ENCODE measurements at regions of chr21 and their contacts with region 1.

Region 1: GRCh38 chr21:45140346-45140940 is 66.1 kb downstream of the ADARB1 start:
- DNase-seq: peak; percentile 88
- ATAC-seq: peak; percentile 96
- H3K4me3 Mint-ChIP-seq: no peak overlapping the region
- H3K27ac Mint-ChIP-seq: no peak overlapping the region
- H3K4me1 Mint-ChIP-seq: peaks cover 7% of the 10 kb centered on the region
- H3K27me3 Mint-ChIP-seq: no peaks in the 10 kb centered on the region

Region 2: GRCh38 chr21:44958471-44959191 is 181.8 kb before region 1 on chr21:
- CTCF ChIA-PET with region 1: interaction called, 275 read pairs
- DNase-seq: no peak
- ATAC-seq: no peak
- H3K4me3 Mint-ChIP-seq: no peak overlapping the region
- H3K27ac Mint-ChIP-seq: no peak overlapping the region
- H3K4me1 Mint-ChIP-seq: no peaks in the 10 kb centered on the region
- H3K27me3 Mint-ChIP-seq: no peaks in the 10 kb centered on the region

Region 3: GRCh38 chr21:45074818-45075595 is 65.4 kb before region 1 on chr21:
- CTCF ChIA-PET with region 1: interaction called, 69 read pairs
- DNase-seq: no peak
- ATAC-seq: peak; percentile 7
- H3K4me3 Mint-ChIP-seq: peak overlapping the region; percentile 76
- H3K27ac Mint-ChIP-seq: no peak overlapping the region
- H3K4me1 Mint-ChIP-seq: peaks cover 48% of the 10 kb centered on the region
- H3K27me3 Mint-ChIP-seq: peaks cover 9% of the 10 kb centered on the region

Region 4: GRCh38 chr21:45120975-45121374 is 19.5 kb before region 1 on chr21:
- CTCF ChIA-PET with region 1: interaction called, 135 read pairs
- DNase-seq: no peak
- ATAC-seq: no peak
- H3K4me3 Mint-ChIP-seq: no peak overlapping the region
- H3K27ac Mint-ChIP-seq: no peak overlapping the region
- H3K4me1 Mint-ChIP-seq: peaks cover 9% of the 10 kb centered on the region
- H3K27me3 Mint-ChIP-seq: no peaks in the 10 kb centered on the region

Region 5: DNA sequence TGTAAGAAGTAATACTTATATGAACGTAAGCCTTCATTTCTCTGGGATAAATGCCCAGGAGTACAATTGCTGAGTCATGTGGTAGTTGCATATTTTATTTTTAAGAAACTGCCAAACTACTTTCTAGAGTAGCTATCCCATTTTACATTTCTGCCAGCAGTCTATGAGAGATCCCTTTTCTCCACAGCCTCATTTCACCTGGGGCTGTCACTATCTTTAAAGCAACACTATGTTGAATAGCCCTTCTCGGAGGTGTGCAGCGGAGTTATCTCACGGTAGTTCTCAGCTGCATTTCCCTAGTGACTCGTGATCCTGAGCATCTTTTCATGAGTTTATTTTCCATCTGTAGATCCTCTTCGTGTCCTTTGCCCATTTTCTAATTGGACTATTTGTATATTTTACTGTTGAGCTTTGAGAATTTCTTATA is 27.4 kb after region 1 on chr21:
- CTCF ChIA-PET with region 1: interaction called, 44 read pairs
- DNase-seq: no peak
- ATAC-seq: no peak
- H3K4me3 Mint-ChIP-seq: no peak overlapping the region
- H3K27ac Mint-ChIP-seq: no peak overlapping the region
- H3K4me1 Mint-ChIP-seq: peaks cover 23% of the 10 kb centered on the region
- H3K27me3 Mint-ChIP-seq: no peaks in the 10 kb centered on the region

Region 6: DNA sequence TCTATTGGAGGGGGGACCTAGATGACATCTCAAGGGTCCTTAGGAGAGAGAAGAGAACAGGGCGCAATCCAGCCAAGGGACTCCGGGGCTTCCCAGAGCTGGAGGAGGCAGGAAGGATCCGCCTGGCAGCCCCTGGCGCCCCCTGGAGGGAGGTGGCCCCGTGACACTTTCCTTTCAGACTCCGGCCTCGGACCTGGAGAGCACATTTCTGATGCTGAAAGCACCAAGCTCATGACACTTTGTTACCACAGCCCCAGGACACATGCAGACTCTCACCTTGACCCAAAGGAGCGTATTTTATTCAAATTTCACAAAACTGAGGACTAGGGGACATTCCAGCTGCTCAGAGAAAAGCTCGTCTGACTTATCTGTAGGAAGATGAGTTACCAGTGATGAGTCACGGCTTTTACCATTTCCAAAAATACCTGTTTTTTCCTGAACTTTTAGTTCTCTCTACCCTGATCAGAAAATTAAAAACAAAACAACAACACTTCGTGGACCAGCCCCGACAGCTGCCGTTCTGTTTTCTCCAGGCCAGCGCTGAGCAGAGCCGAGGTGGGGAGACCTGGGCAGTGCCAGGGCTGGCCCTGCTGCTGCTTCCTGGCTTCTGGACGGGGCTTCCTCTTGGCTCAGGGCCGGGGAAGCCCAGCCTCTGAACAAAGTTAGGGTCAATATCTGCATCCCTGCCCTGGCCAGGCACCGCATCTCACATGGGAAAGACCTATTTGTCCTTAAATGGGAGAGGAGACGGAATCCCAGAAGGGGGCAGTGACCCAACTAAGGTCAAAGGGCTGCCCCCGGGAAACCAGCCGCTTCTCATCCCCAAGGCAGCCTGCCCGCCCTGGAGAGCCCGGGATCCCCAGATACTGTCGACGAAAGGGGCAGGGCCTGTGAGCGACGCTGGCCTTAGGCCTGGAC is 168.9 kb after region 1 on chr21:
- CTCF ChIA-PET with region 1: interaction called, 19 read pairs
- DNase-seq: peak; percentile 50
- ATAC-seq: peak; percentile 56
- H3K4me3 Mint-ChIP-seq: no peak overlapping the region
- H3K27ac Mint-ChIP-seq: no peak overlapping the region
- H3K4me1 Mint-ChIP-seq: peaks cover 10% of the 10 kb centered on the region
- H3K27me3 Mint-ChIP-seq: peaks cover 14% of the 10 kb centered on the region

Region 7: GRCh38 chr21:45534663-45535331 is 394.4 kb after region 1 on chr21:
- CTCF ChIA-PET with region 1: no interaction called
- DNase-seq: no peak
- ATAC-seq: no peak
- H3K4me3 Mint-ChIP-seq: no peak overlapping the region
- H3K27ac Mint-ChIP-seq: no peak overlapping the region
- H3K4me1 Mint-ChIP-seq: peaks cover 16% of the 10 kb centered on the region
- H3K27me3 Mint-ChIP-seq: no peaks in the 10 kb centered on the region